Heart left ventricle (tissue), 16 donors: ENCODE measurements at regions of chr18 and their contacts with region 1.

Region 1: GRCh38 chr18:22169007-22169864 is at the start of gene GATA6:
- DNase-seq: peak; percentile 90 to 96 (median 92)
- ATAC-seq: peak; percentile 74 to 85 (median 76)
- H3K4me3 ChIP-seq: peak within 1 kb of the TSS; percentile 66 to 99 (median 86)
- H3K27ac ChIP-seq: peak within 1 kb of the TSS; percentile 92 to 100 (median 98)
- H3K4me1 ChIP-seq: peaks cover 0 to 40% (median 8%) of the 10 kb centered on the region in 12 donors
- H3K27me3 ChIP-seq: peaks cover 0 to 75% (median 9%) of the 10 kb centered on the region in 9 donors
- CTCF ChIP-seq: peak in 9 of 12 donors; percentile 17 to 64 (median 47)
- POLR2A ChIP-seq: peak; percentile 50 to 91
- total RNA-seq, gene GATA6: 44.9 to 97.7 (median 76.3) TPM

Region 2: DNA sequence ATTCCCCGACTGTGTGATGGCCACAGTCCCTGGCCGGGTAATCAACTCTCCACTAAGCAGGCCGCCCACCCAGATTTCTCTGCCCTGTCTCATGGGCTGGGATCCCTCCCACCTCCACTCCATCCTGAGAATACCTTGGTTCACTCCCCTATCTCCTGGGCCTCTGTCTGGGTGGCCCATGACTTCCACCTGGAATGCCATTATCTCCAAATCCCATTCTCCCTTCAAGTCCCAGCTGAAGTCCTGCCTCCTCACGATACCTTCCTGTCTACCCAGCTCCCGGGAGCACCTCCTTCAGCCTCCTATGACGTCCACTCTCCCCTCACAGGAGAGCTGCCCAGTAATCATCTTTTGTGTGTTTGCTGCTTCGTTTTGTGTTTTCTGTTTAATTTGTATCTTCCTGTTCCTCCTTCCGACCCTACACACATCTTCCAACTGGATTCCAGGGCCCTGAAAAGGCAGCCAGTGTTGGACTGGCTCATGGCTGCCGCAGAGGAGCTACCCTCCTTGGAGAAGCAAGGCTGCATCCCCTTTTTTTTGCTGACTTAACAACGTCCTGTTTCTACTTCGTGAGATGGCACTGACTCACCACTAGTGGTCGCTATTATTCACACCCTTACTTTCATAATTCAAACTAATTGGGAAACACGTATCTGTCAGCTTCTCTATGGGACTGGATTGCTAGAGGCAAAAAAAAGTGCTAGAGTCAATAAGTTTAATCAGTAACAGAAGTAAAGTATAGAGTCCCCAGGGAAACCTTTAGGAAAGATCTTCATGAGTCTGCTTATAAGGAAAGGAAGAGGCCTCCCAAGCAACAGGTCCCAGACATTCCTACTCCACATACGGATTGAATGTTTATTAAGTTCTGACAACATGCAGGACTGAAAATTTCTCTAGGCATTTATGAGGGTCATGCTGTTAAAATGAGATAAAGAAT is 171.8 kb before region 1 on chr18:
- intact Hi-C with region 1: loop called (anchors 1 to 5 kb)
- DNase-seq: no peak
- ATAC-seq: peak; percentile 62 to 77 (median 70)
- H3K4me3 ChIP-seq: no peak overlapping the region
- H3K27ac ChIP-seq: peak overlapping the region in 9 of 12 donors; percentile 42 to 88 (median 67)
- H3K4me1 ChIP-seq: peaks cover 0 to 26% (median 10%) of the 10 kb centered on the region in 12 donors
- H3K27me3 ChIP-seq: no peaks in the 10 kb centered on the region
- CTCF ChIP-seq: peak; percentile 73 to 91 (median 82)
- POLR2A ChIP-seq: no peak

Region 3: GRCh38 chr18:22113144-22113830 is 55.9 kb before region 1 on chr18:
- intact Hi-C with region 1: loop called in 1 of 10 experiments (anchors 10 kb)
- DNase-seq: peak; percentile 70 to 90 (median 77)
- ATAC-seq: peak; percentile 85 to 95 (median 88)
- H3K4me3 ChIP-seq: no peak overlapping the region
- H3K27ac ChIP-seq: peak overlapping the region in 2 of 12 donors; percentile 43 to 65
- H3K4me1 ChIP-seq: peaks cover 0 to 22% (median 11%) of the 10 kb centered on the region in 12 donors
- H3K27me3 ChIP-seq: no peaks in the 10 kb centered on the region
- CTCF ChIP-seq: no peak
- POLR2A ChIP-seq: no peak

Region 4: GRCh38 chr18:22348521-22349316 is 179.5 kb after region 1 on chr18:
- intact Hi-C with region 1: loop called in 8 of 10 experiments (anchors 2 to 10 kb)
- DNase-seq: peak; percentile 78 to 87 (median 81)
- ATAC-seq: peak; percentile 54 to 73 (median 70)
- H3K4me3 ChIP-seq: peak overlapping the region; percentile 30 to 65 (median 60)
- H3K27ac ChIP-seq: peak overlapping the region; percentile 84 to 98 (median 92)
- H3K4me1 ChIP-seq: peaks cover 0 to 56% (median 39%) of the 10 kb centered on the region in 12 donors
- H3K27me3 ChIP-seq: peaks cover 0 to 27% (median 0%) of the 10 kb centered on the region in 9 donors
- CTCF ChIP-seq: peak in 1 of 12 donors; percentile 7
- POLR2A ChIP-seq: no peak

Region 5: GRCh38 chr18:22412176-22412908 is 243.1 kb after region 1 on chr18:
- intact Hi-C with region 1: no loop called
- DNase-seq: no peak
- ATAC-seq: no peak
- H3K4me3 ChIP-seq: no peak overlapping the region
- H3K27ac ChIP-seq: no peak overlapping the region
- H3K4me1 ChIP-seq: peaks cover 0 to 7% (median 0%) of the 10 kb centered on the region in 12 donors
- H3K27me3 ChIP-seq: no peaks in the 10 kb centered on the region
- CTCF ChIP-seq: no peak
- POLR2A ChIP-seq: no peak

Region 6: DNA sequence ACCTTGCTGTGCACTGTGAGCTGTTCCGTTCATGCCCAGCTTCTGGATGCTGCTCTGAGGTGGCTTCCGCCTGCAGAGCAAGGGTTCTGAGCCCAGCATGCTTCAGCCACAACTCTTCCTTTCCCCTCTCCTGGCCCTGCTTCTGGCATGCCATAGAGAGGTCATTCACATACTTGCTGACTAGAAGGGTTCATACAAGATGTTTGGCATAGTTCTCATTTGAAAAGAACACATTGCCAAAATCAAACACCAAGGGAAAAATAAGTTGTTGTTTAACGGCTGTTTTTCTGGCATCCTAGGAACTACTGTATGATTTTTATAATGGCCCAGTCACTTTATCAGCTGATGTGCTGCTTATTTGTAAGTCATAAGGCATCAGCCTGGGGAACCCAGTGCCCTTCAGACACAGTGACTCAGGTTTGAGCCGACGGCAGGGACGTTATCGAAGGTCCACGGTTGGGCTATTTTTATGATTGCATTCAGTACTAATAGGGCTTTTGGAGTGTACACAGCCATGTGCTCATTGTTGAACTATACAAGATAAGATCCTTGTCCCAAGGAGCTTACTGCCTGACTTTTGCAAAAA is 302.4 kb after region 1 on chr18:
- intact Hi-C with region 1: loop called in 5 of 10 experiments (anchors 5 to 10 kb)
- DNase-seq: peak in 4 of 5 donors; percentile 74 to 89 (median 82)
- ATAC-seq: peak; percentile 88 to 95 (median 92)
- H3K4me3 ChIP-seq: no peak overlapping the region
- H3K27ac ChIP-seq: peak overlapping the region; percentile 58 to 97 (median 85)
- H3K4me1 ChIP-seq: peaks cover 0 to 53% (median 42%) of the 10 kb centered on the region in 12 donors
- H3K27me3 ChIP-seq: no peaks in the 10 kb centered on the region
- CTCF ChIP-seq: no peak
- POLR2A ChIP-seq: peak in 1 of 2 donors; percentile 33